ENCODE measurements at regions of chr9 and their contacts with region 1.

Region 1: DNA sequence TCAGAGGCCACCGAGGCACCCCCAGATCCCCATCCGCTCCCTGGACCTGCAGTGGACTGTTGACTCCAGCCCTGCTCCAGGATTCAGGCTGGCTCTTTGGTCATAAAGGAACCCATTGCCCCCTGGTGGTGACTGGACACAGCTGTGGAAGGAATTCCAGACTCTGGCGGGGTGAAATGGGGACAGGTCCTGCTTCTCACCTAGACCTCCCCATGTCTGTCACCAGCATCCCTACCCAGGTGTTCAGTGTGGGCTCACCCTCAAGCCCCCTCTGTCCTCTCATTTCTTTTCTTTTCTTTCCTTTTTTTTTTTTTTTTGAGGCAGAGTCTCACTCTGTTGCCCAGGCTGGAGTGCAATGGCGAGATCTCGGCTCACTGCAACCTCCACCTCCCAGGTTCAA is 25.5 kb upstream of the STXBP1 start:
- DNase-seq: peak; percentile 81
- ATAC-seq: peak; percentile 95
- H3K4me3 ChIP-seq: no peak overlapping the region
- H3K27ac ChIP-seq: no peak overlapping the region
- H3K4me1 ChIP-seq: peaks cover 7% of the 10 kb centered on the region
- H3K27me3 ChIP-seq: no peaks in the 10 kb centered on the region
- CTCF ChIP-seq: peak; percentile 87

Region 2: DNA sequence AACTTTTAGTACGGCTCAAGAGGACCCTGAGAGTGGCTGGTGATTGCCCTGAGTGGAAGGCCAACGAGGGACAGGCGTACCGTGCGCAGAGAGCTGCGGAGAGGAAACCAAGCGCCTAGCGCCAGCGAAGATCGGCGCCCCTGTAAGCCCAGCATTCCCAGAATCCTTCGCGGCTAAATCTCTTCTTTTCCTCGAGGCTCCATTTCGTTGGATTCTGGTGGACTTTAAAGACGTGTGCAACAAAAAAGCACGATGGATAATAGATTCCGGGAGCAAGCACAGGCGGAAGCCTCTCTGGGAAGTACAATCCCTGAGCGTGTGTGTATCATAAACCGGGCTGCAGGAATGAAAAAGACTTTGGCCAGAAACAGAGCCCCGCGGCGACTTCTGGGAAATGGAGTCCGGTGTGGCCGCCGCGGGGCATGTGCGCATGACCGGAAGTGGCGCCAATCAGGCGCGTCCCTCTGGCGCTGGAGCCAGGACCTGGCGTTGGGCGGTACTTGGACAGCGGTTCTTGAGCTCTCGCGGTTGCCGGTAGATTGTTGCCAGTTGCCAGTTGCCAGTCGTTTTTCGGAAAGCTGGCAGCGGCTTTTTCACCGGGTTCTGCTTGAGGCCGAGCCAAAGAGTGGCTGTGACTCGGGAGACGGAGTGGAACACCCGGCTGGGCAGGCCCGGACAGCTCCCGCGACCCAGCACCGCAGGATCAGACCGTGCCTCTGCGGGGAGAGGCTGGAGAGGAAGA is 162.4 kb before region 1 on chr9 and contains the start of gene ZNF79:
- intact Hi-C with region 1: no loop called
- DNase-seq: peak; percentile 97
- ATAC-seq: peak; percentile 98
- H3K4me3 ChIP-seq: peak within 1 kb of the TSS; percentile 84
- H3K27ac ChIP-seq: peak within 1 kb of the TSS; percentile 91
- H3K4me1 ChIP-seq: peaks cover 32% of the 10 kb centered on the region
- H3K27me3 ChIP-seq: no peaks in the 10 kb centered on the region
- CTCF ChIP-seq: no peak
- total RNA-seq, gene ZNF79: 8.3 TPM

Region 3: DNA sequence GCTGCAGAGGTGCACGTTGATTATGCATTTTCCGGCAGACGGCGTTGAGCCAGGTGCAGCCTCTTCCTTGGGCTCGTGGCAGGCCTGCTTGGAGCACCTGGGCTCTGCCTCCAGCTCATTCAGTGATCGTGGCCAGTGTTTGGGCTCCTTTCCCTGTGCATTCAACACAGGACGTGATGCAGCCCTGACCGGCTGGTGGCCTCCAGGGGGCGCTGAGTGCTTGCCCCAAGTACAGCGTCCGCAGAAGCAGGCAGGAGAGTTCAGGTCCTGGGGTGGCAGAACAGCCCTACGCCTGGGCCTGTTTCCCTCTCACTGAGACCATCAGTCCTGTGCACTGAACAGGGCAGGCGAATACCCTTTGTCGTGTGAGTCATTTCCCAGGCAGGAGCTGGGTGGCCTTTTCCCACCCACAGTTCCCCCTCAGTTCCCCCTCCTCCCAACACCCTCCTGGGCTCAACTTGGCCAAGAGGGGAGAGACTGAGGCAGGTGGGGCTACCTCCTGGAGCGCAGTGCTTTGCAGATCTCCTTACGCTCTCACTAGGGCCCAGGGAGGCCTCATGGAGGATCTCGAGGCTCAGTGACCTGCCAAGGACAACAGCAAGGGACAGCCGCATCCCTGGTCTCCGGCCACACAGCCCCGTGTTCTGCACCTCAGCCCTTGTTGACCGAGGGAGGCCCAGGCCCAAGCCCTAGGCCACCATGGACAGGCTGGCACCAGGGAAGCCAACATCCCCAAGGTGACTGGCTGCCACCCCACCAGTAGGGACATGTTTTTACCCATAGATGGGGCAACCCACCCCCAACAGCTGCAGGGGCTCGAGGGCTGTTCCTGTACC is 82.4 kb before region 1 on chr9:
- intact Hi-C with region 1: loop called (anchors 5 kb)
- DNase-seq: peak; percentile 89
- ATAC-seq: peak; percentile 82
- H3K4me3 ChIP-seq: no peak overlapping the region
- H3K27ac ChIP-seq: no peak overlapping the region
- H3K4me1 ChIP-seq: no peaks in the 10 kb centered on the region
- H3K27me3 ChIP-seq: no peaks in the 10 kb centered on the region
- CTCF ChIP-seq: peak; percentile 84

Region 4: GRCh38 chr9:127734747-127735529 is 148.4 kb after region 1 on chr9 and contains the start of gene TOR2A:
- intact Hi-C with region 1: loop called (anchors 5 kb)
- DNase-seq: peak; percentile 99
- ATAC-seq: peak; percentile 96
- H3K4me3 ChIP-seq: peak within 1 kb of the TSS; percentile 82
- H3K27ac ChIP-seq: peak within 1 kb of the TSS; percentile 96
- H3K4me1 ChIP-seq: peaks cover 9% of the 10 kb centered on the region
- H3K27me3 ChIP-seq: no peaks in the 10 kb centered on the region
- CTCF ChIP-seq: peak; percentile 90
- total RNA-seq, gene TOR2A: 17.3 TPM

Region 5: DNA sequence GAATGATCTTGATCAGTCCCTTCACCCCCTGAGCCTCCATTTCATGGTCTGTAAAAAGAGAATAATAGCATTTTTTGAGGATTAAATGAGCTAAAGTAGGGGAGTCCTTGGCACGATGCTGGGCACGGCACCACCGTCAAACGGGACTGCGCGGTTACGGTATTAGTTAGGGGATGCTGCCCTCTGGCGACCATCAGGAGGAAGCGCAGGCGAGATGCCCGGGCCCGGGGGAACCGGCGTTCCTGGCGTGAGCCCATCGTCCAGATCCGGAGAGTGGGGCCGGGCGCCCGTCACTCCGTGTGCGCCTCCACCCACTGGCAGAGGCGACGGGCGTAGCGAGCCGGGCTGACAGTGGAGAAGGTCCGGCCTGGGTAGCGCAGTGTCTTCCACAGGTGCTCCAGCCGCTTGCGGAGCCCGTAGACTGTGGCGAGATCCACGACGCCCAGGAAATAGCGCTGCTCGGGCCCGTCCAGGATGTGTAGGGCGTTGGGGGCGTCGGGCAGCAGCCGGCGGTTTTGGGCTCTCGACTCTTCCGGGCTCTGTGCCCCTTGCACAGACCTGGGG is 335.1 kb after region 1 on chr9:
- intact Hi-C with region 1: loop called (anchors 5 kb)
- DNase-seq: peak; percentile 86
- ATAC-seq: peak; percentile 59
- H3K4me3 ChIP-seq: peak overlapping the region; percentile 30
- H3K27ac ChIP-seq: no peak overlapping the region
- H3K4me1 ChIP-seq: peaks cover 40% of the 10 kb centered on the region
- H3K27me3 ChIP-seq: peaks cover 1% of the 10 kb centered on the region
- CTCF ChIP-seq: peak; percentile 98